Brain microvascular endothelial cell (primary cell): ENCODE measurements at regions of chr13 and their contacts with region 1.

Region 1: GRCh38 chr13:76903544-76904162 is 17.4 kb upstream of the KCTD12 start:
- DNase-seq: peak; percentile 74
- H3K4me3 ChIP-seq: no peak overlapping the region
- H3K27ac ChIP-seq: no peak overlapping the region
- H3K27me3 ChIP-seq: no peaks in the 10 kb centered on the region
- CTCF ChIP-seq: peak; percentile 99

Region 2: DNA sequence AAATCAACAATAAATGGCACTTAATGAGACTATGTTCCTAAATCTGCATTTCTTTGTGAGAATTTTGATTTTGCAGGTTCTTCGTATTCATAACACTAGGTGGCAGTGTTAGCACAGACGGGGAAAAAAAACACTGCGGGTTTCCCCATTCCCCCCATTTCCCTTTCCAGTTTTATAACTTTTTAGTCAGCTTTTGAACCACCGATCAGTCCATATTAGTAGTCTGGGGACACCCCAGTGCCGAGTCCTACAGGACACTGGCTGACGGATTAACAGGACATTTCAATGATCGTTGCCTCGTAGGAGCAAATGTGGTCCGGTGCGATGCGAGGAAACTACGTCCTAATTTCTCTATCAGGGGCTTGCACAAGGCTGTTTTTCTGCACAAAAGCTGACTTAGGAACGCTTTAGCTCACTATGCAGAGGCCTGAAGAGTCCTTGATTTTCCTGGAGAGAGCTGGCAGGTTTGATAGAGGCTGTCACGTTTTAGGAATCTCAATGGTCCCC is 1033.2 kb before region 1 on chr13:
- in situ Hi-C with region 1: loop called (anchors 25 kb)
- DNase-seq: no peak
- H3K4me3 ChIP-seq: peak overlapping the region; percentile 52
- H3K27ac ChIP-seq: no peak overlapping the region
- H3K27me3 ChIP-seq: no peaks in the 10 kb centered on the region
- CTCF ChIP-seq: peak; percentile 71

Region 3: DNA sequence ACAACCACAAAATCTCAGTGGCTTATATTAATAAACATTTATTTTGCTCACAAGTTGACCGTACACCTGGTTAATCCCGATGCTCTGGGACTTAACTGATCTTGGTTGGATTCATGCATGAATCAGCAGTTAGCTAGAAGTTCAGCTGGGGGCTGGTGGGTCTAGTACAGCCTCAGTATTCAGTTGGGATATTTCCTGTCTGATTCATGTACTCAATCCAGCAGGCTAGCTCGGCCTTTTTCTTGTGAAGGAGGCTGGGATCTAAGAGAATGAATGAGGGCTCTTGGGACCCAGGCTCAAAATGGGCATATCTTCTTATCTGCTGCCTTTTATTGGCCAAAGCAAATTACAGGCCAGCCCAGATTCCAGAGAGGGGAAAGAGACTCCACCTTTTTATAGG is 196.3 kb before region 1 on chr13:
- in situ Hi-C with region 1: no loop called
- DNase-seq: peak; percentile 70
- H3K4me3 ChIP-seq: no peak overlapping the region
- H3K27ac ChIP-seq: no peak overlapping the region
- H3K27me3 ChIP-seq: no peaks in the 10 kb centered on the region
- CTCF ChIP-seq: no peak